Cardiac septum (tissue), 1 donor: ENCODE measurements at regions of chr12 and their contacts with region 1.

Region 1: DNA sequence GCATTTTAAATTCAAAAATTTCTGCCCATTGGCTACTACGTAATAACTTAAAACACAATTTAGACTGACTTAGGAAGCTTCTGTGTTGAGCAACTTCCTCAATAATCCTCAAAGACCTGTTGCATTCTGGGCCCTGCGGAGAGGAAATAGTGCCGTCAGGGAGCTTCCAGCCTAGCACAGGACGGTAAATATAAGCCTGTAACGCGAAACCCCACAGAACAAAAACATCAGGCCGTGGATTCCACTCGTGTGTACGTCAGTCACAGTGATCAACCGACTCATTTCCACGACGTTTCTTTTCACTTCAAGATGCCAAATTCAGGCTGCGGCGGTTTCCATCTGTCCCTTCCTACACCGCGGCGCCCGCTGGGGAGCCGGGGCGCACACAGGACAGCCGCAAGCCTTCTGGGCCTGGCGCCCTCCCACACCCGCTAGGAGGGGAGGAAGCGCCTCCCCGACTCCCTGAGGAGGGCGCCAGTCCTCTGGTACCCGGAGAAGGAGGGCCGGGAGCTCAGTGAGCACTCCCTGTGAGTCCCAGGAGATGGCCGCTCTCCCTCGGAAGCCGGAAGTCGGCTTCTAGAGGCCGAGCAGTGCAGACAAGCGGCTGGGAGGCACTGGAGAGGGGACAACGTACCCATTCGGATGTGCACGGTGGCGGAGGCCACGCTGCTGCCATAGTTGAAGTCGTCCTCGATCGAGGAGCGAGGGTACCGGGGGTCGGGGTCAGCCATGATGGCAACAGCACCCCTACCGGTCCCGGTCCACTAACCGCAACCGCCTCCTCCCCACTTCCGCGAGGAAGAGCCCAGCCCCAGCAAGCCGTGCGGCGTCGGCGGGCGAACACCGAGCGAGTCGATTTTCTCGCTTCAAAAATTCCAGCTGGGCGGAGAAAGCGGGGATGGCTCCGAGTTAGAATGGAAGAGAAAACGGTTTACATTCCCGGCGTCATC is at the start of gene TMBIM4:
- DNase-seq: peak; percentile 94
- total RNA-seq, gene TMBIM4: 79.5 TPM

Region 2: GRCh38 chr12:66130277-66131066 is 39.0 kb before region 1 on chr12 and contains the start of gene LLPH:
- intact Hi-C with region 1: loop called (anchors 5 kb)
- DNase-seq: peak; percentile 96
- total RNA-seq, gene LLPH: 25.4 TPM

Region 3: GRCh38 chr12:66159123-66159522 is 10.4 kb before region 1 on chr12:
- intact Hi-C with region 1: loop called (anchors 2 kb)
- DNase-seq: no peak

Region 4: GRCh38 chr12:66188584-66189485 is 19.3 kb after region 1 on chr12 and contains the start of gene IRAK3:
- intact Hi-C with region 1: loop called (anchors 2 kb)
- DNase-seq: peak; percentile 96
- total RNA-seq, gene IRAK3: 3.2 TPM